Ascending aorta (tissue), 2 donors: ENCODE measurements at regions of chr9 and their contacts with region 1.

Region 1: GRCh38 chr9:115524453-115525059 is 406.6 kb upstream of the TNC start:
- DNase-seq: peak in 1 of 2 donors; percentile 66
- H3K4me3 ChIP-seq: no peak overlapping the region
- H3K27ac ChIP-seq: no peak overlapping the region
- H3K4me1 ChIP-seq: peaks cover 0 to 3% of the 10 kb centered on the region in 2 donors
- H3K27me3 ChIP-seq: no peaks in the 10 kb centered on the region
- CTCF ChIP-seq: peak; percentile 69 to 82 (median 70)

Region 2: GRCh38 chr9:114405294-114406034 is 1119.1 kb before region 1 on chr9:
- intact Hi-C with region 1: loop called (anchors 10 kb)
- DNase-seq: peak in 1 of 2 donors; percentile 89
- H3K4me3 ChIP-seq: no peak overlapping the region
- H3K27ac ChIP-seq: no peak overlapping the region
- H3K4me1 ChIP-seq: no peaks in the 10 kb centered on the region
- H3K27me3 ChIP-seq: no peaks in the 10 kb centered on the region
- CTCF ChIP-seq: peak; percentile 78 to 87 (median 87)

Region 3: DNA sequence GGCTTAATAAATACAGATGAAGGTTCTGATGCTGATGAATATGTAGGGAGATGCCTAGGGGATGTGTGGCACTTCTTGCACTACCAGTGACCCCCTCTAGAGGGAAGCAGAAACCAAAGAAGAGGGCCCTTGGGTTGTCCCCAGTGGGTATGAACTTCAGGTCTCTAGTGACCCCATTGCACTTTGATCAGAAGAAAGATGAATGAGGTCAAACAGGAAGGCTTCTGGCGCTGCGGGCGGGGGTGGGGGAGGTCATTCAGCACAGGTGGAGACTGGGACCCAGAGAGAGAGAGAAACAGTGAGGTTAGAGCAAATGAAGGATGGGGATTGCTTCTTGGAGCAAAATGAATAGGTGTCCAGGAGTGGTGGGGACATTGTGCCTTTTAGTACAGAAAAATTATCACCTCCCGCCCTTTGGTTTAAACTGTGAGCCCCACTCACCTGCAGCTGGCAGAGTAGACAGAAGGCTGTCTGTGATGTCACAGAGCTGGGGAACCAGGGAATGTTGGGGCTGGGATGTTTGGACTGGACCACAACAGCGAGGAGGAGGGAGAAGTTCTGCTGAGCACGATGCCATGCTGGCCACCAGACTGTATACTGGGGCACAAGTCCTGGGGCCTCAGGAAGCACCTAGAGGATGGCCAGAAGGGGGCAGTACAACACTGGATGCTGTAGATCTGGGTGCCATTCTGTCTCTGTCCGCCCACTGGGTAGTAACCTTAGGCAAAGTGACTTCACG is 842.8 kb before region 1 on chr9 and contains the start of gene TEX48:
- intact Hi-C with region 1: loop called (anchors 5 kb)
- DNase-seq: peak in 1 of 2 donors; percentile 67
- H3K4me3 ChIP-seq: no peak within 1 kb of the TSS
- H3K27ac ChIP-seq: no peak within 1 kb of the TSS
- H3K4me1 ChIP-seq: peaks cover 0 to 4% of the 10 kb centered on the region in 2 donors
- H3K27me3 ChIP-seq: no peaks in the 10 kb centered on the region
- CTCF ChIP-seq: peak; percentile 40 to 58 (median 43)
- total RNA-seq, gene TEX48: not detected

Region 4: GRCh38 chr9:114906908-114907571 is 617.5 kb before region 1 on chr9:
- intact Hi-C with region 1: loop called (anchors 10 kb)
- DNase-seq: no peak
- H3K4me3 ChIP-seq: no peak overlapping the region
- H3K27ac ChIP-seq: no peak overlapping the region
- H3K4me1 ChIP-seq: no peaks in the 10 kb centered on the region
- H3K27me3 ChIP-seq: no peaks in the 10 kb centered on the region
- CTCF ChIP-seq: peak in 2 of 3 experiments; percentile 13 to 28

Region 5: DNA sequence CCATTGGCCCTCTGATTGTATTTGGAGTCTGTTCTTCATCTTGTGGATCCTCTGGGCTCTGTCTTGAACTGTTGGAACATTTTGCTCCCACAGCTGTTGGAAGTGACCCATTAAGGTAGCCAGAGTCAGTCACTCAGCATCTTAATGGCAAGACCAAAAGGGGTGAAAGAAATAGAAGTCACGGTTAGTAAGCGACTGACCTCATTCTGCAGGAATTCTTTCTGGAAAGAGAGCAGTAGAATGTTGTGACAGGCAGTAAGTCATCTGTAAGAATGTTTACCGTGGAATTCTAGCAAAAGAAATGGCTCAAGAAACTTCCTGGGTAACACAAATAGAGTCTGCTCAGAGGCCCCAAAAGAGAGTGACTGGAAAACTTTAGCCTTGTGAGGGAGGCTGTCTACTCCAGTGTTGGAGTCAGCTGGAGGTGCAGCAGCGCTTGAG is 378.0 kb before region 1 on chr9:
- intact Hi-C with region 1: loop called (anchors 10 kb)
- DNase-seq: peak in 1 of 2 donors; percentile 77
- H3K4me3 ChIP-seq: no peak overlapping the region
- H3K27ac ChIP-seq: peak overlapping the region; percentile 85 to 86
- H3K4me1 ChIP-seq: peaks cover 6 to 7% of the 10 kb centered on the region in 2 donors
- H3K27me3 ChIP-seq: no peaks in the 10 kb centered on the region
- CTCF ChIP-seq: no peak

Region 6: GRCh38 chr9:115395511-115396021 is 129.0 kb before region 1 on chr9:
- intact Hi-C with region 1: no loop called
- DNase-seq: no peak
- H3K4me3 ChIP-seq: no peak overlapping the region
- H3K27ac ChIP-seq: no peak overlapping the region
- H3K4me1 ChIP-seq: no peaks in the 10 kb centered on the region
- H3K27me3 ChIP-seq: no peaks in the 10 kb centered on the region
- CTCF ChIP-seq: no peak

Region 7: GRCh38 chr9:115808108-115808507 is 283.6 kb after region 1 on chr9:
- intact Hi-C with region 1: no loop called
- DNase-seq: no peak
- H3K4me3 ChIP-seq: no peak overlapping the region
- H3K27ac ChIP-seq: no peak overlapping the region
- H3K4me1 ChIP-seq: no peaks in the 10 kb centered on the region
- H3K27me3 ChIP-seq: no peaks in the 10 kb centered on the region
- CTCF ChIP-seq: no peak

Region 8: GRCh38 chr9:115992834-115993233 is 468.3 kb after region 1 on chr9:
- intact Hi-C with region 1: no loop called
- DNase-seq: no peak
- H3K4me3 ChIP-seq: no peak overlapping the region
- H3K27ac ChIP-seq: no peak overlapping the region
- H3K4me1 ChIP-seq: no peaks in the 10 kb centered on the region
- H3K27me3 ChIP-seq: no peaks in the 10 kb centered on the region
- CTCF ChIP-seq: no peak